H1 (cell line): ENCODE measurements at regions of chr22 and their contacts with region 1.

Region 1: DNA sequence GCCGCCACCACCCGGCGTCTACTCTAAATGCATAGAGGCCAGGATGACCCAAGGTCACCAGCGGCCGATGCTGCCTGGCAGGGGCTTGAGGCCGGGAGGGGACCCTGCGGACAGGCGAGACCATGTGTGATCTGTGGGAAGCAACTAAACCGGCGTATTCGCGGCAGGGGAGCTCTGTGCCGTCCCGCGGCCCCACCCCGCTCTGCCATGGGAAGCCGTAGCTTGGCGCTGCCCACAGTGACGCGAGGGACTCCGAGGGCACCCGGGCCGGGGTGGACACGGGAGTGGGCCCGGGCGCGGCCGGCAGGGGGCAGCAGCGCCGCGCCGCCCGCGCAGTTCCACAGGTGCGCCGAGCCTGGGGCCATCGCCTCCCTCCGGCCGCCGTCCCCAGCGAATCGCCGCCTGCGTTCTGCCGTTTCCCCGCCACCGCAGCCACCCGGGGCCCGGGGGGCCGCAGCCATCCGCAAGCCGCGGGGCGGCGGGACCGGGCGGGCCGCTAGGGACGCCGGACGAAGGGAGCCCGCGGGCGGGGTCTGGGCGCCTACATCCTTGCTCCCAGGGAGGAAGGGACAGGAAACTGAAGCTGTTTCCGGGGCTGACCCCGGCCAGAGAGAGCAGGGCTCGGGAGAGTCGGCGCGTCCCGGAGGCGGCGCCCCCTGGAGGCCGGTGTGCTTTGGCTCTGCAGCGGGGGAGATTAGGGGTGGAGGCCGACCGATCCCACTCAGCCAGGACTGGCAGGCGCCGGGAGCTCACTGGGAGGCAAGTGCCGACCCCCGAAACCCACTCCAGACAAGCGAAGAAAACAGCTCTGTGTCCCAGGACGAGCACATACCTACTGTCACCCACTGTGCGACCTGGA is 12.5 kb upstream of the HDHD5 start:
- DNase-seq: peak; percentile 79 to 97
- H3K4me3 ChIP-seq: peak overlapping the region; percentile 39 to 69 (median 60)
- H3K27ac ChIP-seq: peak overlapping the region; percentile 41; the same call in 1 of the 2 replicates
- H3K4me1 ChIP-seq: peaks cover 0 to 11% (median 5%) of the 10 kb centered on the region in 4 experiments; a peak in 5 of 7 replicates
- H3K27me3 ChIP-seq: no peaks in the 10 kb centered on the region
- CTCF ChIP-seq: peak; percentile 81 to 92 (median 83)
- EP300 ChIP-seq: peak; percentile 2 to 29; a peak in 1 of 3 replicates
- POLR2A ChIP-seq: peak in 1 of 2 experiments; percentile 75; a peak in 2 of 3 replicates
- RAD21 ChIP-seq: peak; percentile 58 to 74

Region 2: DNA sequence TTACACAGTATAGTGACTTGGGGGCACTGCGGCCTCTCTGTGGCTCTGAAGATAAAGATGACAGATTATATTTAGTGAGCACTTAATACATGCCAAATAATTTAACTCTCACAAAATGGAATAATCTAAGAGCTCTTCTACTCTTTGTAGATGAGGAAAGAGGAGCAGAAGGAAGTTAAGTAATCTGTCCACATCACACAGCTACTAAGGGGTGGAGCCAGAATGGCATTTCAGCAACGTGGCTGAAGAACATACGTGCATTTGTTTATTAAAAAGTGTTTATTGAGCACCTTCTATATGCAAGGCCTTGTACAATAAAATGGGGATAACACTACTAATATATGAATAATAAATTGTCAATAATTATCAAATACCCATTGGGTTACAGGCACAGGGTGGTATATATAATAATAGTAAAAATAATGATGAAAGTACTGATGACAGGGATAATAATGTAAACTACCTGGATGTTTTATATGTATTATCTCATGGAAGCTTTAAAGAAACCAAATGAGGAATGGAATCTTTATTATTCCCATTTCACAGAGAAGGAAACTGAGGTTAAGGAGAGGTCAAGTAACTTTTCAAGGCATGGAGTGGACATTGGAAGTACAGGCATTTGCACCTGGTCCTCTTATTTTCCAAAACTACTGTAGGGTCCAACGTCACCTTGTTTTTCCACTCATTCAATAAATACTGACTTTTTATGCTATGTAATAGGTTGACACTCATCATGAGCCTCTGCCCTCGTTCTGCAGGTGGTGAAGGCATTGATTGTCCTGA is 124.8 kb before region 1 on chr22:
- CTCF ChIA-PET with region 1: no interaction called
- POLR2A ChIA-PET with region 1: no interaction called
- DNase-seq: no peak
- H3K4me3 ChIP-seq: no peak overlapping the region
- H3K27ac ChIP-seq: no peak overlapping the region
- H3K4me1 ChIP-seq: no peaks in the 10 kb centered on the region
- H3K27me3 ChIP-seq: no peaks in the 10 kb centered on the region; a peak in 3 of 7 replicates
- CTCF ChIP-seq: no peak
- EP300 ChIP-seq: no peak
- POLR2A ChIP-seq: no peak
- RAD21 ChIP-seq: no peak

Region 3: DNA sequence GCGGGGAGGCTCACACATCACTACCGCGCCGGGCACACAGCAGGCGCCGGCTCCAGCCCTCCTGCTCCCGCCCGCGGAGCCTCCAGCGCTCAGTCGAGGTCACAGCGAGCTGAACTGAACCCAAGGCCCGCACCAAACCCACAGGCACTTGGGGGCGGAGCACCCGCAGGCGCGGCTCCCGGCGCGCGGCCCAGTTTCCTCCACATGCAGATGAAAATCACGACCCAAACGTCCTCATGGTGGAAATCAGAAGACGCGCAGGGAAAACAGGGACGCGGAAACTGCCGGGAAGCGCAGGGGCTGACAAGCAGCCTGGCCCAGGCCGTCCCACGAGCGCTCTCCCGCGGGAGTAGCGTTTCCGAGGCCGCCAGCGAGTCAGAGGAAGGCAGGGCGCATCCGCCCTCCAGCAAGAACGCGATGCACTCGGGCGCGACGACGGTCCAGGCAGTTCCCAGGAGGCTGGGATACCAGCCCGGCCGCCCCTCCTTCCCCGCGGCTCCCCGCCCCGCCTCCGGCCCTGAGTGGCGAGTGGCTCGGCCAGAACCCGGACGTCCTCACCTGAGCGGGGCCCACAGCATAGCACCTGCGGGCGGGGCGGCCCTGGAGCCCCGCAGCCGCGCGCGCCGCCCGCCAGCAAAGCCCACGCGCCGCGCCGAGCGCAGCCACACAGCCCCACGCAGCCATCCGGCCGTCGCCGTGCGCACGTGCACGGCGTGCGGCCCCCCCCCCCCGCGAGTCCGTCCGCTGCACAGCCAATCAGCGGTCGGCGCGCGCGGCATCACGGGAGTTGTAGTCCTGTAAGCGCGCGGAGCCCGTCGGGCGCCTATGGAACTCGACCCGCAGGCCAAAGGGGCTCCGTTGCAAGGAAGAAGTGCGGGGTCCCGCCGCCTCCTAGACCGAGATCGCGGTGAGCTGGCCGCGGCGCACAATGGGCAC is 12.7 kb before region 1 on chr22 and contains the start of gene HDHD5:
- CTCF ChIA-PET with region 1: interaction called, 12 read pairs
- POLR2A ChIA-PET with region 1: interaction called, 7 read pairs
- DNase-seq: peak; percentile 50 to 89
- H3K4me3 ChIP-seq: peak within 1 kb of the TSS; percentile 47 to 70 (median 66)
- H3K27ac ChIP-seq: no peak within 1 kb of the TSS; the same call in 1 of the 2 replicates
- H3K4me1 ChIP-seq: peaks cover 3 to 8% (median 5%) of the 10 kb centered on the region in 4 experiments; a peak in 6 of 7 replicates
- H3K27me3 ChIP-seq: 0 out of 7 replicates have a peak, but pooled peaks cover 0 to 4% (median 0%) of the 10 kb centered on the region in 4 experiments
- CTCF ChIP-seq: no peak
- EP300 ChIP-seq: no peak
- POLR2A ChIP-seq: peak in 1 of 2 experiments; percentile 54; a peak in 1 of 3 replicates
- RAD21 ChIP-seq: no peak
- total RNA-seq, gene HDHD5: 68.3 and 69.3 TPM in 2 replicates

Region 4: DNA sequence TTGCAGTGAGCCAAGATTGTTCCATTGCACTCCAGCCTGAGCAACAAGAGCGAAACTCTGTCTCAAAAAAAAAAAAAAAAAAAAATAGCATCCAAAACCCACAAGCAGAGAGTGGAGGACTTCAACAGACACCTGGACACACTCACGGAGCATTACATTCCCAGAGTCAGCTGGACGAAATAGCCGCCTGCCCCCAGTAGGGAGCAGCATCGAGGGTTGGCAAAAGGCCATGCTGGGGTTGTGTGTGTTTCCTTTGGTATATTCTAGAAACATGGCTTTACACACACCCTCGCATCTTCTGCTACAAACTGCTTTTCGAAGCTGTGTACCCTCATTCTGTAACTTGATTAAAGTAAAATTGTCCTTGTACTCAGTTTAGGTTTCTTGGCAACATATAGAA is 42.4 kb after region 1 on chr22:
- CTCF ChIA-PET with region 1: interaction called, 29 read pairs
- POLR2A ChIA-PET with region 1: interaction called, 4 read pairs
- DNase-seq: peak in 1 of 2 experiments; percentile 72
- H3K4me3 ChIP-seq: no peak overlapping the region
- H3K27ac ChIP-seq: no peak overlapping the region
- H3K4me1 ChIP-seq: peaks cover 5 to 11% (median 8%) of the 10 kb centered on the region in 4 experiments; a peak in 6 of 7 replicates
- H3K27me3 ChIP-seq: no peaks in the 10 kb centered on the region
- CTCF ChIP-seq: peak; percentile 67 to 81 (median 77)
- EP300 ChIP-seq: no peak
- POLR2A ChIP-seq: no peak
- RAD21 ChIP-seq: peak; percentile 56 to 67

Region 5: DNA sequence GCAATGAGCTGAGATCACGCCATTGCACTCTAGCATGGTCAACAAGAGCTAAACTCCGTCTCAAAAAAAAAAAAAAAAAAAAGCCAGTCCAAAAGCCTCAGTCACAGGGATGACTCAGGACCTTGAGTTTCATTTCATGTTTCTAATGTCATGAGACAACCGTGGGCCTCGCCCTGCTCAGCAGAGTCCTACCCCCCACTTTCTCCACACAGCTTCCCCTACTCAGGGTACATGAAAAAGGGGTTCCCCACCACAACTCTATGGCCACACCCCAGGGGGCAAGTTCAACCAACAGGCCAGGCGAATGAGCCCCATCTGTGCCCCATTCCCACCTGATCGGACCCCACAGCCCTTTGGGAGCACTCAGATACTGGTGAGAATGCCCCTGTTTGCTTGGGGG is 72.0 kb after region 1 on chr22:
- CTCF ChIA-PET with region 1: interaction called, 15 read pairs
- POLR2A ChIA-PET with region 1: interaction called, 3 read pairs
- DNase-seq: no peak
- H3K4me3 ChIP-seq: no peak overlapping the region
- H3K27ac ChIP-seq: no peak overlapping the region
- H3K4me1 ChIP-seq: peaks cover 0 to 3% (median 0%) of the 10 kb centered on the region in 4 experiments; a peak in 2 of 7 replicates
- H3K27me3 ChIP-seq: no peaks in the 10 kb centered on the region
- CTCF ChIP-seq: no peak
- EP300 ChIP-seq: no peak
- POLR2A ChIP-seq: no peak
- RAD21 ChIP-seq: no peak

Region 6: DNA sequence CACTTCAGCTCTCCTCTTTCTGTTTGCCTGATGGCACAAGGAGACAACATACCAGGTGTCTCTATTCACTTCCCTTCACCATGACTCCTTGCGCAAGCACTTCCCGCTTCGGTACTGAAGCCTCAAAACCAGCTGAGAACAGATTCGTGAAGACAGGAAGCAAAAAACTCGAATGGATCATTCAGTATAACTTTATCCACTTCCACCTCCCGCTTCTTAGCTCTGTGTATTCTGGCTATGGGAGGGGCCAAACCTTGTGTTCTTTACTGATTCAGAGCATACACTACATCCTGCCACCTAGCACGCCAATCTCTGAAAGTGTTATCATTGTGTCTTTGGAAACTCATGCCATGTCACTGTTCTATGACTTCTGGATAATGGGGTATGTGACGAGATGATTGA is 109.9 kb after region 1 on chr22:
- CTCF ChIA-PET with region 1: no interaction called
- POLR2A ChIA-PET with region 1: no interaction called
- DNase-seq: no peak
- H3K4me3 ChIP-seq: no peak overlapping the region
- H3K27ac ChIP-seq: no peak overlapping the region
- H3K4me1 ChIP-seq: no peaks in the 10 kb centered on the region
- H3K27me3 ChIP-seq: no peaks in the 10 kb centered on the region
- CTCF ChIP-seq: no peak
- EP300 ChIP-seq: no peak
- POLR2A ChIP-seq: no peak
- RAD21 ChIP-seq: no peak

Region 7: GRCh38 chr22:17368554-17369438 is 197.3 kb after region 1 on chr22:
- CTCF ChIA-PET with region 1: interaction called, 22 read pairs
- POLR2A ChIA-PET with region 1: interaction called, 4 read pairs
- DNase-seq: peak; percentile 60 to 84
- H3K4me3 ChIP-seq: peak overlapping the region; percentile 65 to 92 (median 81)
- H3K27ac ChIP-seq: peak overlapping the region; percentile 91
- H3K4me1 ChIP-seq: peaks cover under 1 to 15% (median 6%) of the 10 kb centered on the region in 4 experiments; a peak in 6 of 7 replicates
- H3K27me3 ChIP-seq: no peaks in the 10 kb centered on the region
- CTCF ChIP-seq: no peak
- EP300 ChIP-seq: peak in 1 of 2 experiments; percentile 89; a peak in 2 of 3 replicates
- POLR2A ChIP-seq: peak; percentile 18 to 85
- RAD21 ChIP-seq: peak in 1 of 2 experiments; percentile 3; a peak in 2 of 4 replicates